ENCODE measurements at regions of chr19 and their contacts with region 1.

Region 1: GRCh38 chr19:50556282-50557008 is 11.8 kb downstream of the LRRC4B start:
- DNase-seq: peak; percentile 44 to 64 (median 54)
- H3K4me3 ChIP-seq: peak overlapping the region; percentile 18 to 73 (median 34)
- H3K4me3 Mint-ChIP-seq: peak overlapping the region; percentile 79 to 96
- H3K27ac ChIP-seq: no peak overlapping the region
- H3K27ac Mint-ChIP-seq: no peak overlapping the region
- H3K4me1 ChIP-seq: peaks cover 6 to 9% of the 10 kb centered on the region in 2 donors
- H3K4me1 Mint-ChIP-seq: peaks cover 7% of the 10 kb centered on the region
- H3K27me3 ChIP-seq: peaks cover 0 to 41% of the 10 kb centered on the region in 2 donors
- H3K27me3 Mint-ChIP-seq: peaks cover 38 to 66% (median 58%) of the 10 kb centered on the region in 3 donors
- CTCF ChIP-seq: peak; percentile 92

Region 2: GRCh38 chr19:50315773-50316448 is 240.5 kb before region 1 on chr19:
- intact Hi-C with region 1: no loop called
- DNase-seq: peak in 1 of 3 donors; percentile 57
- H3K4me3 ChIP-seq: no peak overlapping the region
- H3K4me3 Mint-ChIP-seq: peak overlapping the region in 1 of 2 donors; percentile 75
- H3K27ac ChIP-seq: no peak overlapping the region
- H3K27ac Mint-ChIP-seq: no peak overlapping the region
- H3K4me1 ChIP-seq: peaks cover 0 to 4% of the 10 kb centered on the region in 2 donors
- H3K4me1 Mint-ChIP-seq: peaks cover 3% of the 10 kb centered on the region
- H3K27me3 ChIP-seq: peaks cover 39 to 63% of the 10 kb centered on the region in 2 donors
- H3K27me3 Mint-ChIP-seq: peaks cover 57 to 77% (median 72%) of the 10 kb centered on the region in 3 donors
- CTCF ChIP-seq: no peak

Region 3: DNA sequence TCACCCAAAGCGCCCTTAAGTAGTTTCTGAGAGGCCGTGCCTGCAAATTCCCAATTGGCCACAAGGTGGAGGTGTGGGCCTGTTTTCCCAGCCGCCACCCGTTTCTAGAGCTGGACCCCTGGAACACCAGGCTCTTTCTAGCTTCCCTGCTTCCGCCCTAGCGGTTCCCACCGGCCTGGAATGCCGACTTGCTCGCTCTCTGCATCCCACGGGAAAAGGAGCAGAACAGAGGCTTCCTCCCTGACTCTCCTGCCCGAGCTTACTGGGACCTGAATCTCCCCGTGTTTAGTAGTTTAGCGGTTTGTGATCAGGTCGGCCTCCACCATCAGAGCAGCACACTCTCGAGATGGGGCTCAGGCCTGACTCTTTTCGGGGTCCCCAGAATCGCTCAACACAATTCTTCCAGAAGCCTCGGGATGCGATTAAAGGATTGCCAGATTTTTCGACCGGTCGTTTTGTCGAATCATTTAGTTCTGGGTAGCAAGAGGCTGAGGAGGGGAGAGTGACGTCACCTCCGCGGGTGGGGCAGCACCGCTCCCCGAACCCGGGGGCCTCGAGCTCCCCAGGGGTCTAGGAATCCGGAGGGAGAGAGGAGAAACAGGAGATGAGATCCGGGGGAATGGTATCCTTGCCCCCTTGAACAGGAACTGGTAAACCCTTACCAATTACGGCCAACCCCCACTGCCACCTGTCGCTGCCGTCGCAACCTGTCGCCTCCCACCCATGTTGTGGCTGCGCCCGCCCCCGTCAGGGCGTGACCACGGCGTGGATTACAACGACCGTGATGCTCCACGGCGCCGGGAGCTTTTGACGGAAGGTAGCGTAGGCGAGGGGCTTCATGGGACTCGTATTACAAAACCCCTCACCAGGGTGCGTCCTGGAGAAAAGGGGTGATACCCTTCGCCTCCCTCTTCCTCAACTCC is 199.0 kb before region 1 on chr19:
- intact Hi-C with region 1: loop called in 1 of 2 experiments (anchors 5 kb)
- DNase-seq: peak; percentile 65 to 76 (median 66)
- H3K4me3 ChIP-seq: peak overlapping the region; percentile 61 to 74 (median 64)
- H3K4me3 Mint-ChIP-seq: peak overlapping the region; percentile 86 to 92
- H3K27ac ChIP-seq: peak overlapping the region; percentile 81 to 91
- H3K27ac Mint-ChIP-seq: peak overlapping the region; percentile 92 to 98 (median 97)
- H3K4me1 ChIP-seq: peaks cover 24 to 35% of the 10 kb centered on the region in 2 donors
- H3K4me1 Mint-ChIP-seq: peaks cover 36% of the 10 kb centered on the region
- H3K27me3 ChIP-seq: no peaks in the 10 kb centered on the region
- H3K27me3 Mint-ChIP-seq: peaks cover 3 to 20% (median 14%) of the 10 kb centered on the region in 3 donors
- CTCF ChIP-seq: peak; percentile 93

Region 4: DNA sequence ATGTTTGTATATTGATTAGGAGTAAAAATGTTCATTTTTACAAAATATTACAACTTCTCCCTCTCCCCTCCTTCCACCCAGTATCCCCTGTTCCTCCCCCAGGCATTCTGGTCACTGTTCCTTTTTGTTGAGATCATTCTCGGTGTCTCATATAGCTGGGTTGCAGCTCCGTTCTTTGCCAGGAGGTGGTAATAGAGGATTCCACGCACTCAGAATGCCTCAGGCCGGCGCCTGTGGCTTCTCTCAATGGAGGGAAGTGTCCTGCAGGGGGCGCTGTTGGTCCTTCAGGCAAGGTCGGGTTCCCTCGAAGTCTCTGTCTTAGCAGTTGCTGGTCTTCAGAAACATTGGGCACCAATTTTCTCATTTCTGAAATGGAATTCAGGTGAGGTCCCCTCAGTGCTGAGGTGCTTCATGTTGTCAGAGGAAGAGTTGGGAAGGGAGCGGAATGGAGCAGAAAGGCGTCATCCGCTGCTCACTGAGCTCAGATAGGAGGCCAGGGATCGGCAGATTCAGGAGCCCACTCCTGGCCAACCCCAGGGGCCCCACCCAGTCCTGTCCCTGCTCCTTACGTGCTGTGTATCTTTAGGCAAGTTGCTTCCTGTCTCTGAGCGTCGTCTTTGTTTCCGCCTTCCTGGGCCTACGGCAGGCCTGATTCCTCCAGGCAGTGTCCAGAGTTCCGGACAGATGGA is 69.5 kb before region 1 on chr19:
- intact Hi-C with region 1: loop called in 1 of 2 experiments (anchors 2 kb)
- DNase-seq: peak; percentile 29 to 41 (median 41)
- H3K4me3 ChIP-seq: peak overlapping the region in 1 of 3 experiments; percentile 69
- H3K4me3 Mint-ChIP-seq: no peak overlapping the region
- H3K27ac ChIP-seq: peak overlapping the region; percentile 19 to 68
- H3K27ac Mint-ChIP-seq: peak overlapping the region; percentile 14 to 94 (median 50)
- H3K4me1 ChIP-seq: peaks cover 53 to 63% of the 10 kb centered on the region in 2 donors
- H3K4me1 Mint-ChIP-seq: peaks cover 62% of the 10 kb centered on the region
- H3K27me3 ChIP-seq: no peaks in the 10 kb centered on the region
- H3K27me3 Mint-ChIP-seq: peaks cover 1 to 7% (median 7%) of the 10 kb centered on the region in 3 donors
- CTCF ChIP-seq: peak; percentile 65

Measured in CD14-positive monocyte (primary cell).